Activated T-helper 2 cell treated with anti-CD3 and anti-CD28 coated beads, Interferon-gamma antibody, Interleukin-2, Interleukin-4, amounts not matched to agents 10 μg/mL and 5 μg/mL and 100 μg/mL, durations not matched to agents 14 hours and 24 hours and 36 hours (primary cell): ENCODE measurements at regions of chr19 and their contacts with region 1.

Region 1: GRCh38 chr19:50922317-50922853 is 11.2 kb upstream of the KLK4 start:
- DNase-seq: peak; percentile 70
- H3K4me3 Mint-ChIP-seq: no peak overlapping the region
- H3K27ac Mint-ChIP-seq: no peak overlapping the region
- H3K4me1 Mint-ChIP-seq: peaks cover 8% of the 10 kb centered on the region
- H3K27me3 Mint-ChIP-seq: peaks cover 26% of the 10 kb centered on the region

Region 2: GRCh38 chr19:50537762-50538230 is 384.6 kb before region 1 on chr19:
- intact Hi-C with region 1: loop called (anchors 1 kb)
- DNase-seq: peak; percentile 43
- H3K4me3 Mint-ChIP-seq: no peak overlapping the region
- H3K27ac Mint-ChIP-seq: no peak overlapping the region
- H3K4me1 Mint-ChIP-seq: no peaks in the 10 kb centered on the region
- H3K27me3 Mint-ChIP-seq: peaks cover 3% of the 10 kb centered on the region

Region 3: DNA sequence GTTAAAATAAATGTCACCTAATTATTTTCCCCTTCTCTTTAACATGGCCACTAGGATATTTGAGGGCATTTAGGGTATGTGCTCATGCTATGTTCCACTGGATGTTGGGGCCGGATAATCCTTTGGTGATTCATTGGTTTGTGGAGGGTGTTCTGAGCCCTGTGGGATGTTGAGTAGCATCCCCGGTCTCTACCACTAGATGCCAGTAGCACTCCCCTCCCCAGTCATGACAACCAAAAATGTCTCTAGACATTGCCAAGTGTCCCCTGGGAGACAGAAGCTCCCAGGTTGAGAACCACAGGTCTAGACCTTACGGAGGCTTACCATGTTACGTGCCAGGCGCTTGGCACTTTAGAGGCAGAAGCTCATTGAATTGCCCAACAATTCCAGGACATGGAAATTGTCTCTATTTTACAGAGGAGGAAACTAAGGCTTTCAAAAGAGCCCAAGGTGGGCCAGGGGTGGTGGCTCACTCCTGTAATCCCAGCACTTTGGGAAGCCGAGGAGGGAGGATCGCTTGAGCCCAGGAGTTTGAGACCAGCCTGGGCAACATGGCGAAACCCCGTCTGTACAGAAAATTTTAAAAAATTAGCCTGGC is 216.9 kb before region 1 on chr19:
- intact Hi-C with region 1: loop called (anchors 1 kb)
- DNase-seq: no peak
- H3K4me3 Mint-ChIP-seq: no peak overlapping the region
- H3K27ac Mint-ChIP-seq: no peak overlapping the region
- H3K4me1 Mint-ChIP-seq: no peaks in the 10 kb centered on the region
- H3K27me3 Mint-ChIP-seq: peaks cover 16% of the 10 kb centered on the region

Region 4: DNA sequence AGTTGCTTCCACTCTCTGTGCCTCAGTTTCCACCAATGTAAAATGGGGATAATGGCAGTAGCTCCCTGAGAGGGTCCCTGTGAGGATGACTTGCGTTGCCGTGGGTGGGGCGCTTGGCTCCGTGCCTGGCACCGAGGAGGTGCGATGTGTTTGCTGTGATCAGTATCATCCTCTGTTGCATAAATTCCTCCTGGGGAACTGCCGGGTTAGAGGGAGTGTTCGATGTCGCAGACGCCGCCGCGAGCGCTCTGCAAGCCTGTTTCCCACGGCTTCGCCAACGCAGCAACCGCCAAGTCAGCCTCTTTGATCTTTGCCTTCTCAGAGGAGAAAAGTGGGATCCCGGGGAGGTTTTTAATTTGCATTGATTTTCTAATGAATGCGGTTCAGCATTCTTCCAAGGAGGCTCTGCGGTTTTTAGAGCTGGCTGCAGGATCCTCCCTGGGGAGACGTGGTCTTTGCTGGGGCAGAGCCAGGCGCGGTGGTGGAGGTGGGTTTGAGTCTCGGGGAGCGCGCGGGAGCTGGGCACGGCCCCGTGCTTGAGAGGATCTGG is 144.6 kb before region 1 on chr19:
- intact Hi-C with region 1: loop called (anchors 10 kb)
- DNase-seq: no peak
- H3K4me3 Mint-ChIP-seq: no peak overlapping the region
- H3K27ac Mint-ChIP-seq: no peak overlapping the region
- H3K4me1 Mint-ChIP-seq: peaks cover 9% of the 10 kb centered on the region
- H3K27me3 Mint-ChIP-seq: peaks cover 48% of the 10 kb centered on the region

Region 5: GRCh38 chr19:50835785-50836542 is 86.4 kb before region 1 on chr19:
- intact Hi-C with region 1: loop called (anchors 10 kb)
- DNase-seq: peak; percentile 75
- H3K4me3 Mint-ChIP-seq: peak overlapping the region; percentile 79
- H3K27ac Mint-ChIP-seq: peak overlapping the region; percentile 51
- H3K4me1 Mint-ChIP-seq: peaks cover 11% of the 10 kb centered on the region
- H3K27me3 Mint-ChIP-seq: peaks cover 30% of the 10 kb centered on the region

Region 6: DNA sequence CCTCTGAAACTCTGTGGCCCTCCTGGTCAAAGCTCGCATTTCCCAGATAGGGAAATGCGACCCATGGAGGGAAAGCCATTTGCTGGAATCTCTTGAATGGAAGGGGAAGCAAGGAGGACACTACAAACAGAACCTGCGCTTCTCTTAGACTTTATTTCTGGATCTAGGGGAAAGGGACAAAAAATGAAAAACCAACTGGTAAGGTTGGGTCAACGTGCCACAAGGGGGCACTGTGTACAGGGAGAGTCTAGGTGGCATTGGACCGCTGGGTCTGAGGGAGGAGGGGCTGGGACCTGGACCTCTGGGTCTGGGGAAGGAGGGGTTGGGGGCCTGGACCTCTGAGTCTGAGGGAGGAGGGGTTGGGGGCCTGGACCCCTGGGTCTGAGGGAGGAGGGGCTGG is 16.2 kb before region 1 on chr19:
- intact Hi-C with region 1: loop called (anchors 1 kb)
- DNase-seq: peak; percentile 15
- H3K4me3 Mint-ChIP-seq: no peak overlapping the region
- H3K27ac Mint-ChIP-seq: no peak overlapping the region
- H3K4me1 Mint-ChIP-seq: peaks cover 4% of the 10 kb centered on the region
- H3K27me3 Mint-ChIP-seq: peaks cover 36% of the 10 kb centered on the region